ENCODE measurements at regions of chr5 and their contacts with region 1.

Region 1: GRCh38 chr5:150789943-150790611 is 11.5 kb downstream of the SMIM3 start:
- DNase-seq: peak; percentile 89
- H3K4me3 Mint-ChIP-seq: peak overlapping the region; percentile 82
- H3K27ac Mint-ChIP-seq: peak overlapping the region; percentile 84
- H3K4me1 Mint-ChIP-seq: peaks cover 55% of the 10 kb centered on the region
- H3K27me3 Mint-ChIP-seq: no peaks in the 10 kb centered on the region

Region 2: GRCh38 chr5:150758531-150759333 is 31.3 kb before region 1 on chr5 and contains the start of gene DCTN4:
- intact Hi-C with region 1: loop called (anchors 1 kb)
- DNase-seq: peak; percentile 97
- H3K4me3 Mint-ChIP-seq: no peak within 1 kb of the TSS
- H3K27ac Mint-ChIP-seq: no peak within 1 kb of the TSS
- H3K4me1 Mint-ChIP-seq: peaks cover 28% of the 10 kb centered on the region
- H3K27me3 Mint-ChIP-seq: no peaks in the 10 kb centered on the region
- total RNA-seq, gene DCTN4: 43.9 and 44.8 TPM in 2 replicates

Region 3: GRCh38 chr5:150960791-150961396 is 170.8 kb after region 1 on chr5:
- intact Hi-C with region 1: no loop called
- DNase-seq: no peak
- H3K4me3 Mint-ChIP-seq: no peak overlapping the region
- H3K27ac Mint-ChIP-seq: no peak overlapping the region
- H3K4me1 Mint-ChIP-seq: no peaks in the 10 kb centered on the region
- H3K27me3 Mint-ChIP-seq: no peaks in the 10 kb centered on the region